Dorsolateral prefrontal cortex (tissue), 120 donors: ENCODE measurements at regions of chr3 and their contacts with region 1.

Region 1: DNA sequence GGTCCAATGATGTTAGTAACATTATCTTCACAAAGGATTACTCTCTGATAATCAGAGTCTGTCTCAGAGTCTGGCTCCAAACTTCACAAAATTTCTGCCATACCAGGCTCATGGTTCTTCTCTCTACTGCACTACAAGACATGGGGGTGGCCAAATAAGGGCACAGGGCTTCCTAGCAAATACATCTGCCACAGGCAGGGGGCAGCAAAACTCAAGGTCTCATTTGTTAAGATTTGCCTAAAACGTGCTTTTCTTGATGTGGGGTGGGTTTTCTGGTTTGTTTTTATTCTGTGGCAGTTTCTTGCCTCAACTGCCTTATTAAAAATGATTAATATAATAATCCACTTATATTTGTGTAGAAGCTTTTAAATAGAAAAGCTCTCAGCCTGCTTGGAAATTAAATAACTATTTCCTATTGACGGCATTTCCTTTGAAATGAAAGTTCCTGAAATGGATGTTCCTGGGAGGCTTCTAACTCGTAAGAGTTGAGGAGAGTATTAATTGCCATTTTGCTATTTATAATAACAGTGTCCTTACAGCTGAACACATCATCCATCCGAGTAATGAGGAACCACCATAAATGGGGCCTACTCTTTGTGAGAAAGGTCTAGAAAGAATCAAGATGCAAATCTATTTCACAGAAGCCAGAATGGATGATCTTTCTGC is 53.8 kb downstream of the SST start:
- DNase-seq: peak in 3 of 10 donors; percentile 9 to 29 (median 25)
- H3K4me3 ChIP-seq: no peak overlapping the region
- H3K27ac ChIP-seq: no peak overlapping the region
- H3K27me3 ChIP-seq: peaks cover 0 to 8% (median 0%) of the 10 kb centered on the region in 45 donors
- CTCF ChIP-seq: peak; percentile 41 to 78 (median 64)

Region 2: DNA sequence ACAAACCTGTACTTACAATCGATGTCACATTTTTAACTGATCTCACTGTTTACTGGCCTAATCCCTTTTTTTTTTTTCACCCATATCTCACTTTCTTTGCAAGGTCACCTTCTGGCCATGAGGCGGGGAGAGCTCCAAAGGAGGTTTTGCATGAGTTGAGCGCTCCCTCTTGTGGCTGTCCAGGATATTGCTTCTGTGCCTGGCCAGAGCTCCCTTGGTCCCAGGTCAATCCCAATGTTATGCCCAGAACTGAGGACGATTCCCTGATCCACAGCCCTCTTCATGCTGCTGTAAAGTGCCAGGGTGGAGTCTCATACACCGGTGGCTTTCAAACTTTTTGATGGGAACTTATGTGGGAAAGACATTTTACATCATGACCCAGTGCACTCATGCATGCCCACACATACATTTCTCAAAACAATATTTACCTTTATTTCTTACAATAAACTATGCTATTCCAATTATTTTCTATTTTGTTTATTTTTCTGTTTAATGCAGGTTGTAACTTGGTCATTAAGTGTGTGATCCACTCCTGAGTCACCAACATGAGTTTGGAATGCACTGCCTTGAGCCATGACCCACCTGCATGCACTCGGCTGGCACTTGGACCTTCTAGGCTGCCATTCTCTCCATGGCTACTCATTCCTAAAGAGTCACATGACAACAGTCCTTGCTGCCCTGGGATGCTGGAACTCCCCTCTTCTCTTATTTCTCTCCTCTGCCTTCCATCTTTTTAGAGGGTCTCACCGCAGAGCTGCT is 63.4 kb after region 1 on chr3:
- intact Hi-C with region 1: loop called in 1 of 2 experiments (anchors 5 kb)
- DNase-seq: peak; percentile 43 to 83 (median 70)
- H3K4me3 ChIP-seq: no peak overlapping the region
- H3K27ac ChIP-seq: no peak overlapping the region
- H3K27me3 ChIP-seq: peaks cover 0 to 19% (median 3%) of the 10 kb centered on the region in 45 donors
- CTCF ChIP-seq: peak; percentile 62 to 98 (median 94)

Region 3: GRCh38 chr3:188067932-188068331 is 451.5 kb after region 1 on chr3:
- intact Hi-C with region 1: no loop called
- DNase-seq: no peak
- H3K4me3 ChIP-seq: no peak overlapping the region
- H3K27ac ChIP-seq: no peak overlapping the region
- H3K27me3 ChIP-seq: no peaks in the 10 kb centered on the region
- CTCF ChIP-seq: no peak